HepG2 (cell line): ENCODE measurements at regions of chr10 and their contacts with region 1.

Region 1: DNA sequence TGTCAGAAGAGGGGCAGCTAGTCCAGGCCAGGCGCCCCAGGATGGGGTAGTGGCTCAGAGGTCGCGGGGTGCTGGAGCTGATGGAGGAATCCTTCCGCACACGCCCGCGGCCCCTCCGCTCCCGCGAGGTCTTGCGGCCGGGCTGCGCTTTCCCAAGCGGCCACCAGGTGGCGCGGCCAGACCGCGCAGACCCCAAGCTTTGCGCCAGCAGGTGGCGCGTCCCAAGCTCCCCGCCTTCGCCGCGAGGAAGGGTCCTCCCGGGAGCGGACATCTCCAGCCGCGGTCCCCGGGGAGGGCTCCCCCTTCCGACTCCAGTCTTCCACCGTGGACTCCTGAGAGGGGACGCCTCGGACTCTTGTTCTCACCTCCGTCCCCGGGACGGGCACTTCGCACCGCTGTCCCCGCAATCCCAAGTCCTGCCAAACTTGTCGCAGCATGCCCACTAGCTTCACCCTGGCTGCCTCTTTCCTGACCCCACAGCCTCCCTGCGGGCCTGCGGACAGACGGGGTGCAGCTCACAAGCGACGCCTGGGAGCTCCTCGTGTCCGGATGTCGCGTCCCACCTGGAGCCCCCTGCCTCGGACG is 19.4 kb downstream of the KCNK18 start:
- DNase-seq: peak; percentile 46
- ATAC-seq: peak; percentile 89
- H3K4me3 ChIP-seq: peak overlapping the region; percentile 49 to 75 (median 61)
- H3K27ac ChIP-seq: no peak overlapping the region
- H3K4me1 ChIP-seq: peaks cover 16% of the 10 kb centered on the region
- H3K27me3 ChIP-seq: peaks cover 2 to 47% of the 10 kb centered on the region in 2 experiments
- CTCF ChIP-seq: peak; percentile 99
- EP300 ChIP-seq: no peak
- POLR2A ChIP-seq: no peak
- RAD21 ChIP-seq: peak; percentile 98

Region 2: DNA sequence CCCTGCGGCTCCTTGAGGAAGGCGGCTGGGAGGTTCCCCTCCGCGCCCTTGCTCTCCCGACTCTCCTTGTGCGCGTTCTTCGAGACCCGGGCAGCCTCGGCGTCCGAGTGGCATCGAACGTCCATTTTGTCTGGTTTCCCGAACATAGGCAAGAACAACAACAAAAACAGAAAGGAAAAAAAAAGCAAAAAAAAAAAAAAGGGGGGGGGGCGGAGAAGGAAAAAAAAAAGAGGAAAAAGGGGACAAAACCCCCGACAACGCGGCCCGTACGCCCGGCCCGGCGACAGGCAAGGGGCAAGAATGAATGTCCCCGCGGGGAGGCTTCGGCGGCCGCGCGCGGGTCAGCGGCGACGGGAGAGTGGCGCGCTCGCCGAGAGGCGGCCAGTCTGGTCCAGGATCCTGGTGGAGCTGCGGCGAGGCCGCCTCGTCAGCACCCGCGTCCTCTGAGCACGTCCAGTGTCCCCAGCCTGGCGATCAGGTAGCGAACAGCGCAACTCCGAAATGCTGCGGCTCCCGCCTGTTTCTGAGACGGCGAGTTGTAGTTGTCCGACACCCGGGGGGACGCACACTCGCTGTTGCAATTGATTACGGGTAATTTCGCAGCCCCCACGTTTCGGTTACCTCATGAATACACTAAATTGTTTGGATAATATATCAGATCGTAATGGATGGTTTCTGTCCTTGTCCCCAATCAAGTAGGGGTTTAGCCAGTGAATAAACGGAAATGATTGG is 78.6 kb before region 1 on chr10 and contains the start of gene VAX1:
- CTCF ChIA-PET with region 1: no interaction called
- POLR2A ChIA-PET with region 1: no interaction called
- in situ Hi-C with region 1: no loop called
- intact Hi-C with region 1: no loop called
- DNase-seq: no peak
- ATAC-seq: no peak
- H3K4me3 ChIP-seq: peak within 1 kb of the TSS in 2 of 3 experiments; percentile 16 to 50; a peak in 3 of 6 replicates
- H3K27ac ChIP-seq: no peak within 1 kb of the TSS
- H3K4me1 ChIP-seq: no peaks in the 10 kb centered on the region
- H3K27me3 ChIP-seq: peaks cover 11 to 60% of the 10 kb centered on the region in 2 experiments
- CTCF ChIP-seq: no peak
- EP300 ChIP-seq: no peak
- POLR2A ChIP-seq: no peak
- RAD21 ChIP-seq: no peak
- total RNA-seq, gene VAX1: not detected in 2 replicates

Region 3: DNA sequence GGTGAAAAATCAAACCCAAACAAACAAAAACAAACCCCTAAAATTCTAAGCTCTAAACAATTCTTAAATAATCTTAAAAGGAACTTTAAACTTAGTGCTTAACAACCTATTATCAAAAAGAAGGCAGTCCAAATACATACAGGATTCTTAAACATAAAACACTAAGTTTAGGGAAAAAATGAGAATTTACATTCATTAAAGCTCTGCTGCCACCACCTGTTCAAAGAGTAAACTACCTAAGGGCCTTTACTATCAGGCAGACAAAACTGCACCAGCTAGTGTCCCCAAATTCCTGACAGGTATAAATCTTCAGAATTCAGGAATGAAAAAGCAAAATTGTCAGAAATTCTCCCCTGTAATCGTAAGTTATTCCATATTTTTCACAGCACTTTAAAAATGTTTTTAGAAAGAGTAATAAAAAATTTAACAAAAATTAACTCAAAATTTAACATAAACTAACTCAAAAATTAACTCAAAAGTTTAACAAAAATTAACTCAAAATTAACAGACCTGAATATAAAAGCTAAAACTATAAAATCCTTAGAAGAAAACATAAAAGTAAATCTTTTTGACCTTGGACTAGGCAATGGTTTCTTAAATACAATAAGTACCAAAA is 103.5 kb after region 1 on chr10:
- CTCF ChIA-PET with region 1: interaction called, 74 read pairs
- POLR2A ChIA-PET with region 1: interaction called, 3 read pairs
- in situ Hi-C with region 1: no loop called
- intact Hi-C with region 1: loop called (anchors 1 kb)
- DNase-seq: peak; percentile 23
- ATAC-seq: peak; percentile 39; the same call in 1 of the 3 replicates
- H3K4me3 ChIP-seq: no peak overlapping the region
- H3K27ac ChIP-seq: no peak overlapping the region
- H3K4me1 ChIP-seq: no peaks in the 10 kb centered on the region
- H3K27me3 ChIP-seq: no peaks in the 10 kb centered on the region
- CTCF ChIP-seq: peak; percentile 59
- EP300 ChIP-seq: no peak
- POLR2A ChIP-seq: no peak
- RAD21 ChIP-seq: peak; percentile 33; the same call in 1 of the 2 replicates

Region 4: GRCh38 chr10:117449636-117450035 is 232.9 kb after region 1 on chr10:
- CTCF ChIA-PET with region 1: interaction called, 32 read pairs
- POLR2A ChIA-PET with region 1: no interaction called
- in situ Hi-C with region 1: loop called (anchors 10 kb)
- intact Hi-C with region 1: loop called (anchors 1 kb)
- DNase-seq: no peak
- ATAC-seq: peak; percentile 80
- H3K4me3 ChIP-seq: no peak overlapping the region
- H3K27ac ChIP-seq: no peak overlapping the region
- H3K4me1 ChIP-seq: peaks cover 17% of the 10 kb centered on the region
- H3K27me3 ChIP-seq: no peaks in the 10 kb centered on the region
- CTCF ChIP-seq: peak; percentile 76
- EP300 ChIP-seq: no peak
- POLR2A ChIP-seq: no peak
- RAD21 ChIP-seq: no peak